H1 (cell line): ENCODE measurements at regions of chr5 and their contacts with region 1.

Region 1: DNA sequence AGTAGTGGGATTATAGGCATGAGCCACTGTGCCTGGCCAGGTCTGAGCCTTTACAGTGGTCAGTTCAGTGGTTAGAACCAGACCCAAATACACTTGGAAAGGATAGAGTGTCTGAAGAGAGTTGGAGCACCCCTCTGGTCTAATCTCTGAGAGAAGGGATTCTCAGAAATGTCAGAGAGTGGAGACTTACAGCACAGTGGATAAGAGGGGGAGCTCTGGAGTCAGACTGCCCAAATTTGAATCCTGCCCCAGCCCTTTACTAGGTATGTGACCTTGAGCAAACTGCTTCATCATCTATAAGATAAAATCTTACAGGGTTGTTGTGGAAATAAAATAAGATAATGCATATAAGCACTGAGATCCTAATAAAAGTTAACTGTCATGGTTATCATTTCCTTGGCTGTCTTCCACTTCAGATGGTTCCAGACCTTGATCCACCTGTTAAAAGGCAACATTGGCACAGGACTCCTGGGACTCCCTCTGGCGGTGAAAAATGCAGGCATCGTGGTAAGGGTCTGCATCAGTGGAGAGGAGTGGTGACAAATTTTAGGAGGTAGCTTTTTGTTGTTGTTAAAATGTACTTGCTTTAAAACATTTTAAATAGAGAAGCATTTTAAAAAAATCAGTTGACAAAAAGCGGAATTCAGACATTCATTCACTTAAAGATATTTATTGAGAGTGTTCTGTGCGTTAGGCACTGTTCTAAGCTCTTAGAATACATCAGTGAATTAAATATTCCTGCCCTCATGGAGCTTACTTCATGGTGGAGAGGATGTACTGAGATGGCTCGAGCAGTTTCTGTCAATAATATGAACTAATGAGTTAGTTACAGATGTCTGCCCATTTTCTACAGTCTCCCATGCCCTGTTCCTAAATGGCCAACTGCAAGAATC is 16.0 kb downstream of the SLC36A1 start:
- DNase-seq: peak in 1 of 2 experiments; percentile 83
- H3K4me3 ChIP-seq: no peak overlapping the region
- H3K27ac ChIP-seq: no peak overlapping the region
- H3K4me1 ChIP-seq: no peaks in the 10 kb centered on the region
- H3K27me3 ChIP-seq: no peaks in the 10 kb centered on the region
- CTCF ChIP-seq: peak; percentile 81 to 85 (median 82)
- EP300 ChIP-seq: no peak
- POLR2A ChIP-seq: no peak
- RAD21 ChIP-seq: peak; percentile 53 to 76

Region 2: GRCh38 chr5:151384106-151384505 is 79.3 kb before region 1 on chr5:
- CTCF ChIA-PET with region 1: interaction called, 34 read pairs
- POLR2A ChIA-PET with region 1: interaction called, 3 read pairs
- DNase-seq: no peak
- H3K4me3 ChIP-seq: no peak overlapping the region
- H3K27ac ChIP-seq: no peak overlapping the region
- H3K4me1 ChIP-seq: peaks cover 5 to 22% (median 18%) of the 10 kb centered on the region in 4 experiments
- H3K27me3 ChIP-seq: no peaks in the 10 kb centered on the region
- CTCF ChIP-seq: no peak
- EP300 ChIP-seq: no peak
- POLR2A ChIP-seq: no peak
- RAD21 ChIP-seq: no peak

Region 3: DNA sequence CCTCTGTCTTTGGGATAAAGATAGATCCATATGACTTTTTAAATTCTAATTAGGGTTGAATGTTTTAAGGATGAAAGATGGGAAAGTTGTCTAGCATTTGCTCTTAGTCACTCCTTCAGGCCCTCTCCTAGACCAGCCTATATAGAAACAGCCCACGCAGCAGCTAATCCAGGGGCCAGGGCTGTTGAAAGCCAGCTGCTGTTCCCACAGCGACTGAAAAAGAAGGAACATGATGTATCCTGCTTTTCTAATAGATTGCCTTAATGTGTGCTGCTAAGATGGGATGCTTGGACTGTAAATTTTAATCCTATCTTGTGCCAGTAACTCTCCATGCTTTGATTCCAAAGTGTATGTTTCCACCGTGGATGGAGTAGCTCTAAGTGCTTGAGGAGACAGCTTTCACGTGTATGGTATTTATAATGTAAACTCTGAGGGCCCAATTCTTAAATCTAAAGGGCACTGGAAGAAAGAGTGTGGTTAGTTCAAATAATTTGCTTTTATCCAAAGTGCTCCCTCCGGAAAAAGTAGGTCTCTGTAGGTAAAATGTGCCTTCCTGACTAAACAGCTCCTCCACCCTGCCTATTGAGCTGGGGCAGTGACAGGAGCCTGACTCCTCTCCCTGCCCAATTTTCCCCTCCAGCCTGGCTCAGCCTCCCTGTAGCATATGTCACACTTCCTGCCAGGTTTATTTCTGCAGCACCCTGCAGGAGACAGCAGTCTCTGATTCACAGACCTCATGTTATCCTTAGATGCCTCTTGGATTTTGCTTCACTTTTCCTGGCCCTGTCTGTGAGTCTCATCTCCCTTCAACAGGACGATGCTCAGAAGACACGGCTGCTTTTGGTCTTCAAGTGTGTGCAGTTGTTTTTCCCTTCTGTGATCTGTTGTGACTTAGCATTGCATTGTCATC is 17.3 kb after region 1 on chr5:
- CTCF ChIA-PET with region 1: interaction called, 72 read pairs
- POLR2A ChIA-PET with region 1: no interaction called
- DNase-seq: no peak
- H3K4me3 ChIP-seq: no peak overlapping the region
- H3K27ac ChIP-seq: no peak overlapping the region
- H3K4me1 ChIP-seq: peaks cover 0 to 18% (median 11%) of the 10 kb centered on the region in 4 experiments; a peak in 2 of 7 replicates
- H3K27me3 ChIP-seq: no peaks in the 10 kb centered on the region
- CTCF ChIP-seq: no peak
- EP300 ChIP-seq: no peak
- POLR2A ChIP-seq: no peak
- RAD21 ChIP-seq: no peak

Region 4: GRCh38 chr5:151499501-151500035 is 36.2 kb after region 1 on chr5:
- CTCF ChIA-PET with region 1: interaction called, 19 read pairs
- POLR2A ChIA-PET with region 1: interaction called, 6 read pairs
- DNase-seq: no peak
- H3K4me3 ChIP-seq: no peak overlapping the region
- H3K27ac ChIP-seq: no peak overlapping the region
- H3K4me1 ChIP-seq: peaks cover 0 to 4% (median under 1%) of the 10 kb centered on the region in 4 experiments; a peak in 3 of 7 replicates
- H3K27me3 ChIP-seq: no peaks in the 10 kb centered on the region
- CTCF ChIP-seq: no peak
- EP300 ChIP-seq: no peak
- POLR2A ChIP-seq: no peak
- RAD21 ChIP-seq: no peak

Region 5: DNA sequence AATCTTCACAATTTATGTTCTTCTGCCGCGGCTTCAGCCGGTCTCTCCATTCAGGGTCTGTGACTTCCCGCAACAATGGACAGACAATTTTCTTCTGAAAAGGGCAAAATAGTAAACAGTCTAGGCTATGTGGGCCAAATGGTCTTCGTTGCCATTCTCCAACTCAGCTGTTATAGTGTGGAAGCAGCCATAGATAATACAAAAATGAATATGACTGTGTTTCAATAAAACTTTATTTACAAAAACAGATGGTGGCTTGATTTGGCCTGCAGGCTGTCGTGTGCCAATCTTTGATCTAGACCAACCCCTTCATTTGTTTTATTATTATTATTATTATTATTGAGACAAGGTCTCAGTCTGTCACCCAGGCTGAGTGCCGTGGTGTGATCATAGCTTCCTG is 267.0 kb after region 1 on chr5:
- CTCF ChIA-PET with region 1: no interaction called
- POLR2A ChIA-PET with region 1: no interaction called
- DNase-seq: no peak
- H3K4me3 ChIP-seq: 0 out of 8 replicates have a peak overlapping the region, but pooled peaks of 1 of the 4 experiments have one; percentile 9
- H3K27ac ChIP-seq: no peak overlapping the region
- H3K4me1 ChIP-seq: peaks cover 0 to 7% (median 3%) of the 10 kb centered on the region in 4 experiments; a peak in 3 of 7 replicates
- H3K27me3 ChIP-seq: no peaks in the 10 kb centered on the region
- CTCF ChIP-seq: no peak
- EP300 ChIP-seq: no peak
- POLR2A ChIP-seq: no peak
- RAD21 ChIP-seq: no peak